ENCODE measurements at regions of chr22 and their contacts with region 1.

Region 1: GRCh38 chr22:23925020-23925606 is 30.9 kb downstream of the MIF start:
- DNase-seq: no peak
- ATAC-seq: no peak
- H3K4me3 Mint-ChIP-seq: no peak overlapping the region
- H3K27ac Mint-ChIP-seq: no peak overlapping the region
- H3K4me1 Mint-ChIP-seq: no peaks in the 10 kb centered on the region
- H3K27me3 Mint-ChIP-seq: peaks cover 34% of the 10 kb centered on the region
- CTCF ChIP-seq: no peak

Region 2: GRCh38 chr22:23913661-23914353 is 11.3 kb before region 1 on chr22:
- CTCF ChIA-PET with region 1: interaction called, 18 read pairs
- POLR2A ChIA-PET with region 1: interaction called, 3 read pairs
- DNase-seq: peak; percentile 99
- ATAC-seq: peak; percentile 99
- H3K4me3 Mint-ChIP-seq: peak overlapping the region; percentile 76
- H3K27ac Mint-ChIP-seq: peak overlapping the region; percentile 94
- H3K4me1 Mint-ChIP-seq: peaks cover 23% of the 10 kb centered on the region
- H3K27me3 Mint-ChIP-seq: peaks cover 43% of the 10 kb centered on the region
- CTCF ChIP-seq: no peak